ENCODE measurements at regions of chr11 and their contacts with region 1.

Region 1: GRCh38 chr11:69088676-69089146 is 40.0 kb downstream of the TPCN2 start:
- DNase-seq: peak; percentile 90 to 94
- H3K4me3 ChIP-seq: no peak overlapping the region
- H3K4me3 Mint-ChIP-seq: no peak overlapping the region
- H3K27ac Mint-ChIP-seq: no peak overlapping the region
- H3K4me1 ChIP-seq: no peaks in the 10 kb centered on the region
- H3K4me1 Mint-ChIP-seq: no peaks in the 10 kb centered on the region
- H3K27me3 ChIP-seq: no peaks in the 10 kb centered on the region
- H3K27me3 Mint-ChIP-seq: no peaks in the 10 kb centered on the region
- CTCF ChIP-seq: peak; percentile 97 to 98

Region 2: DNA sequence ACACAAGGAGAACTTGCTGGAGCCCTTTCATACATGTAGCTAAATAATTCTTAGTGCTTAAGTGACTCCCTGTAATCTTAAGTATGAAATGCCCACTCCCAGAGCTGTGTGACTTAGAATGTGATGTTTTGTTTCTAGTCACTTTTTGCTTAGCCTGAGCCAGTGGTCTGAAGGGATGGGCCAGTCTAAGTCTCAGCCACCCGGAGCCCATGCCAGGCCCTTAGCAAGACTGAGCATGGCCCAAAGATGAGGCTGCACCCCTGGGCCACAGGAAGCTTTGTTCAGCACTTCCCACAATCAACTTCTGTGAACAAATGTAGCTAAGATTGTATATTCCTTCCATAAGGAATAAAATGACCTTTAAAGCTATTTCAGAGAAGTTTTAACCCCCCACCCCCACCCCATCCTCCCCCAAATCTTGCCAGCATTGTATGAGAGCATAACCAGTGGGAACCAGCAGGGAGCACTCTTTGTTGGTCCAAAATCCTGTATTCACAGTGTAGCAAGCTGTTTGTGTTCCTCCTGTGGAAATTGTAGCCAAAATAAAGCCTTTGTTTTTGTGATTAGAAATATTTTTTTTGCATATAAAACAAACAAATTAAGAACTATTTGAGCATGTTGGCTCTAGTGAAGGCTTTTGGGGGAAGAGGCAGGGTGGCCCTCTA is 478.1 kb before region 1 on chr11:
- CTCF ChIA-PET with region 1: interaction called, 11 read pairs
- POLR2A ChIA-PET with region 1: no interaction called
- intact Hi-C with region 1: no loop called
- DNase-seq: no peak
- H3K4me3 ChIP-seq: no peak overlapping the region
- H3K4me3 Mint-ChIP-seq: no peak overlapping the region
- H3K27ac Mint-ChIP-seq: no peak overlapping the region
- H3K4me1 ChIP-seq: no peaks in the 10 kb centered on the region
- H3K4me1 Mint-ChIP-seq: no peaks in the 10 kb centered on the region
- H3K27me3 ChIP-seq: no peaks in the 10 kb centered on the region
- H3K27me3 Mint-ChIP-seq: no peaks in the 10 kb centered on the region
- CTCF ChIP-seq: peak; percentile 12 to 49

Region 3: DNA sequence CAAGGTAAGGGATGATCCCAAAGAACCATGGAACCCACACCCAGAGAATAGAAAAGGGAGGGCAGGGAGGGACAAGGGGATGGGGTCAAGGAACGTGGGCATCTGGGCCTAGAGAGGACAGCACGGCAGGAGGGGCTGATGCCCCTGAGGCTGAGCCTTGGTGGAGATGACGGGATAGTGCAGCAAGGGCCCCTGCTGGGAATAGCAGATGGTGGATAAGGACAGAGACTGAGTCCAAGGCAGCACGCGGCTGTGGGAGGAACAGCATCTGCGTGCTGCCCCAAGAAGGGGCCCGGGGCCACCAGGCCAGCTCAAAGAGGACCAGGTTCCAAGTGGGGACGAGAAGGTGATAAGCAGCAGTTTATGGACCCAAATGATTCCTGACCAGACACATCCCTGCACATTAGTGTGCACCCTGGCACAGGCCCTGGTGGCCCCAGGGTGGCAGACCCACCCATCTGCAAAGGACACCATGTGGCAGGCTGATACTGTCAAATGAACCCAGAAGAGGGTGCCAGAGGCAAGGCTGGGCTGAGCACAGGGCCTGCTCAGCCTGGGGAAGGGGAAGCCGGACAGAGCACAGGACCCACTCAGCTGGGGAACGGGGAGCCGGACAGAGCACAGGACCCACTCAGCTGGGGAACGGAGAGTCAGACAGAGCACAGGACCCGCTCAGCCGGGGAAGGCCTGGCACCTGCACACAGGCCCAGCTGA is 324.6 kb before region 1 on chr11:
- CTCF ChIA-PET with region 1: no interaction called
- POLR2A ChIA-PET with region 1: no interaction called
- intact Hi-C with region 1: loop called (anchors 2 kb)
- DNase-seq: peak in 1 of 2 experiments; percentile 60
- H3K4me3 ChIP-seq: no peak overlapping the region
- H3K4me3 Mint-ChIP-seq: no peak overlapping the region
- H3K27ac Mint-ChIP-seq: peak overlapping the region; percentile 7
- H3K4me1 ChIP-seq: peaks cover 3% of the 10 kb centered on the region
- H3K4me1 Mint-ChIP-seq: peaks cover 7% of the 10 kb centered on the region
- H3K27me3 ChIP-seq: no peaks in the 10 kb centered on the region
- H3K27me3 Mint-ChIP-seq: no peaks in the 10 kb centered on the region
- CTCF ChIP-seq: peak; percentile 41 to 60

Region 4: DNA sequence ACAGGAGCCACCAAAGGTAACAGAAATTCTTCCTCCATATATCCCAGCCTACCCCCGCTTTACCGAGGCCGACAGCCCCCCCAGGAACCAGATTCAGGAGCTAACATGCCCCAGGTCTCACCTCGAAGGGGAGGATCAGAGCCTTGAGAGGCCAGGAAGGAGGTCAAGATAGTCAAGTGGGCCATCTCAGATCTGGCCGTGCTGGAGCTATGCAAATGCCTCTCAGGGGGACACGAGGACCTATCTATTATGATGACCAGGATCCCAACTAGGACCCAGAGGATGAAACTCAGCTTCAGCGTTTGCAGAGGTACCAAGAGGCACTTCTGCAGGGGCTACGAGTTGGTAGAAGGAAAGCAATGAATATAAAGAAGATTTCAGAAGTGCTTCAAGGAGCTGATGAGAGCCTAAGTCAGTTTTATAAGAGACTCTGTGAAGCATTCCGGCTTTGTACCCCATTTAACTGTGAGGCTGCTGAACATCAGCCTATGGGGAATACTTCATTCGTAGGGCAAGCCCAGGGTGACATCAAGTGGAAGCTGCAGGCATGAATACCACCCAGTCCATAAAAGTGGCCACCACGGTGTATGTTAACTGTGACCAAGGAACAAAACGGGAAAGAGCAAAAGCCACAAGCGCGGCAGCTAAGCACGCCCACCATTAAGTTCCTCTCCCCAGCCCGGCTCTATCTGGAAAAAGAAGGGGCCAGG is 219.3 kb before region 1 on chr11:
- CTCF ChIA-PET with region 1: no interaction called
- POLR2A ChIA-PET with region 1: no interaction called
- intact Hi-C with region 1: loop called (anchors 1 kb)
- DNase-seq: peak in 1 of 2 experiments; percentile 46
- H3K4me3 ChIP-seq: peak overlapping the region; percentile 43
- H3K4me3 Mint-ChIP-seq: peak overlapping the region; percentile 80
- H3K27ac Mint-ChIP-seq: peak overlapping the region; percentile 11
- H3K4me1 ChIP-seq: no peaks in the 10 kb centered on the region
- H3K4me1 Mint-ChIP-seq: peaks cover 17% of the 10 kb centered on the region
- H3K27me3 ChIP-seq: no peaks in the 10 kb centered on the region
- H3K27me3 Mint-ChIP-seq: no peaks in the 10 kb centered on the region
- CTCF ChIP-seq: peak in 1 of 2 experiments; percentile 38

Region 5: DNA sequence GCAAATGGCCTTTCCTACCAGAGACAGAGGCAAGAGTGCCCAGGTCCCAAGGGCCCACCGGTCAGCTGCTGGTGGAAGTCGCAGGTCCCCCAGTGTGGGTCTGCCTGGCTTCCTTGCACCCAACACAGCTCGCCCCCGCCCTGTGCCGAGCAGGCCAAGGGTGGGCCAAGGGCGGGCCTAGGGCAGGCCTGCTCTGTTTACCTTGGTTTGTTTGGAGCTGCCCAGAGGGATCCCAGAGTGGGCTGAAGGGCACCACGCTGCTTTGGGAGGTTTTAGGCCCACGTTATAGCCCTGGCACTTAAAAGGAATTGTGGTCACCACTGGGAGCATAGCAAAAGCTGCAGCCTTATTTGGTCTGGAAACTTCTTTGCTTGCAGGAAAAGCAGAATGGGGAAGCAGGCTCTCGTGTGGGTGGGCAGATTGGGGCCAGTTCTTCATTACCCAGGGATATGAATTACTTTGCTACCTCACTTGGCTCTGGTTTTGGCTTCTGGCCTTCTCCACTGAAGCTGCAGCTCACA is 145.9 kb before region 1 on chr11:
- CTCF ChIA-PET with region 1: no interaction called
- POLR2A ChIA-PET with region 1: no interaction called
- intact Hi-C with region 1: no loop called
- DNase-seq: no peak
- H3K4me3 ChIP-seq: no peak overlapping the region
- H3K4me3 Mint-ChIP-seq: no peak overlapping the region
- H3K27ac Mint-ChIP-seq: no peak overlapping the region
- H3K4me1 ChIP-seq: no peaks in the 10 kb centered on the region
- H3K4me1 Mint-ChIP-seq: no peaks in the 10 kb centered on the region
- H3K27me3 ChIP-seq: no peaks in the 10 kb centered on the region
- H3K27me3 Mint-ChIP-seq: no peaks in the 10 kb centered on the region
- CTCF ChIP-seq: no peak

Region 6: DNA sequence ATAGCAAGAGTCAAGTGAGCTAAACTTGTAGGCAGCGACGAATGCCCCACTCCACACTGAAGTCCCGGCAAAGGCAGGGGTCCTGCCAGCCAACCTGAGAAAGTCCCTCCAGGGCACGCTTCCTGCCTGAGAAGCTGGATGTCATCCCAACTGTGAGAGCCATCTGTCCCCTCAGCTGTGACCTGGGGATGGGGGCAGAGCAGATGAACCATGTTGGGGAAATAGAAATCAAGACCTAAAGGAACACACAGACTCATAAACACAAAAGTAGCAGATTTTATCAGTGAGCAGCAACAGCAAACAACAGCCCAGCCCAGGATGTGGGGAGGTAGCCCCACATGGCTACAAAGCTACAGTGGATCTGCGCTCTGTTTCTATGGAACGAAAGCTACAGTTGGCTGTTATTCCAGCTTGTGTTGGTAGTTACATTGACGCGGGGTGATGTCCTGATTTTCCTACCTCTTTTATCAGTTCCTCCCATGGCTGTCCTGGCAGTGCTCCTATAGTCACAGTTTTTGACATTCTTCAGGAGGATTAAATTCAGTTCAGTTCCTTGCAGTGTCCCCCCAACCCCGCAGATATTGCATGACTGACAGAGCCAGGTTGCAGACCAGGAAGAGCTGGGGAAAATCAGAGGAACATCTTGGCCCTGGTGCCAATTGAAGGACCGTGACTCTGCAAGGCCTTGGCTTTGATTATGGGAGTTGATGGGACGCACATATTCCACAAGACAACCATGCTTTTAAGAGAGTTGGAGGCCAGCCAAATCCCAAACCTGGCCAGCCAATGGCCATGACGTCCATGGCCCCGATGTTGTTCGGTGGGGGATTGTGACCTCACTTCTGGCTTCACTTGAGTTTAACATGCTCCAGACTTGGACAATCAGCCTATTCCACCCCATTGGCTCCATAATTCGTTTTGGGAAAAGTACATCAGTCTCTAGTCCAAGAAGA is 122.5 kb before region 1 on chr11:
- CTCF ChIA-PET with region 1: no interaction called
- POLR2A ChIA-PET with region 1: no interaction called
- intact Hi-C with region 1: loop called (anchors 1 kb)
- DNase-seq: peak in 1 of 2 experiments; percentile 25
- H3K4me3 ChIP-seq: no peak overlapping the region
- H3K4me3 Mint-ChIP-seq: no peak overlapping the region
- H3K27ac Mint-ChIP-seq: no peak overlapping the region
- H3K4me1 ChIP-seq: no peaks in the 10 kb centered on the region
- H3K4me1 Mint-ChIP-seq: no peaks in the 10 kb centered on the region
- H3K27me3 ChIP-seq: no peaks in the 10 kb centered on the region
- H3K27me3 Mint-ChIP-seq: no peaks in the 10 kb centered on the region
- CTCF ChIP-seq: no peak

Region 7: DNA sequence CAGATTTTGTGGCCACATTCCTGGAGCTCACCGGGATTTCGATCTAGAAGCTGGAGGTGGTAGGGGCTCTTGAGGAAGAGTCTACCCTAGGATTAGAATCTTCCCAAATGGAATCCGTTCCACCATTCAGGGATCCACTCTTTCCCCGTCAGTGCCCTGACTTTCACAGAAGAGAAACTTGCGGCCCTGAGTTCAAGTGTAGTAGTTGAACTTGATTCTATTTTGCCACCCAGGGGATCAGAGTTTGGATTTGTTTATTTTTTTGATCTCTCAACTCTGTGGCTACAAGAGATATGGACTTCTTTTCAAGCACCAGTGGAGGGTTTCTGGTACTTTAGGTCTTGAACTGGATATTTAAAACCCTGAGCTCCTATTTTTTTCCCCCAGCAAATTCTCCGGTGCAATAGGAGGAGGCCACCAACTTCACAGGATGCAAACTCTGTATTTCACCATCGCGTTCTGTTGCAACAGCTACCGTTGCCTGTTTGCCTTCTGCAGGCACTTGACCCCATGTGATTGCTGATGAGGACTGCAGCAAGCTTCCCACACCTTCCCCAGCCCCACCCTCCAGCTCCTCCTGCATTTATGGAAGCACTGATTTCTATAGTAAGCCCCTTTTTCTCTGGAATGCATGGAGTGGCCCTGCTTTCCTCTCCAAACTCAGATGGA is 60.9 kb before region 1 on chr11:
- CTCF ChIA-PET with region 1: no interaction called
- POLR2A ChIA-PET with region 1: no interaction called
- intact Hi-C with region 1: no loop called
- DNase-seq: peak; percentile 66
- H3K4me3 ChIP-seq: no peak overlapping the region
- H3K4me3 Mint-ChIP-seq: no peak overlapping the region
- H3K27ac Mint-ChIP-seq: no peak overlapping the region
- H3K4me1 ChIP-seq: peaks cover 8% of the 10 kb centered on the region
- H3K4me1 Mint-ChIP-seq: no peaks in the 10 kb centered on the region
- H3K27me3 ChIP-seq: no peaks in the 10 kb centered on the region
- H3K27me3 Mint-ChIP-seq: no peaks in the 10 kb centered on the region
- CTCF ChIP-seq: no peak

Measured in Caco-2 (cell line).